Calu3 (cell line): ENCODE measurements at regions of chr6 and their contacts with region 1.

Region 1: GRCh38 chr6:31690231-31691077 is 9.6 kb upstream of the LY6G5C start:
- DNase-seq: peak; percentile 27
- H3K4me3 Mint-ChIP-seq: no peak overlapping the region
- H3K27ac Mint-ChIP-seq: no peak overlapping the region
- H3K4me1 Mint-ChIP-seq: peaks cover 16% of the 10 kb centered on the region
- H3K27me3 Mint-ChIP-seq: no peaks in the 10 kb centered on the region
- CTCF ChIP-seq: no peak

Region 2: DNA sequence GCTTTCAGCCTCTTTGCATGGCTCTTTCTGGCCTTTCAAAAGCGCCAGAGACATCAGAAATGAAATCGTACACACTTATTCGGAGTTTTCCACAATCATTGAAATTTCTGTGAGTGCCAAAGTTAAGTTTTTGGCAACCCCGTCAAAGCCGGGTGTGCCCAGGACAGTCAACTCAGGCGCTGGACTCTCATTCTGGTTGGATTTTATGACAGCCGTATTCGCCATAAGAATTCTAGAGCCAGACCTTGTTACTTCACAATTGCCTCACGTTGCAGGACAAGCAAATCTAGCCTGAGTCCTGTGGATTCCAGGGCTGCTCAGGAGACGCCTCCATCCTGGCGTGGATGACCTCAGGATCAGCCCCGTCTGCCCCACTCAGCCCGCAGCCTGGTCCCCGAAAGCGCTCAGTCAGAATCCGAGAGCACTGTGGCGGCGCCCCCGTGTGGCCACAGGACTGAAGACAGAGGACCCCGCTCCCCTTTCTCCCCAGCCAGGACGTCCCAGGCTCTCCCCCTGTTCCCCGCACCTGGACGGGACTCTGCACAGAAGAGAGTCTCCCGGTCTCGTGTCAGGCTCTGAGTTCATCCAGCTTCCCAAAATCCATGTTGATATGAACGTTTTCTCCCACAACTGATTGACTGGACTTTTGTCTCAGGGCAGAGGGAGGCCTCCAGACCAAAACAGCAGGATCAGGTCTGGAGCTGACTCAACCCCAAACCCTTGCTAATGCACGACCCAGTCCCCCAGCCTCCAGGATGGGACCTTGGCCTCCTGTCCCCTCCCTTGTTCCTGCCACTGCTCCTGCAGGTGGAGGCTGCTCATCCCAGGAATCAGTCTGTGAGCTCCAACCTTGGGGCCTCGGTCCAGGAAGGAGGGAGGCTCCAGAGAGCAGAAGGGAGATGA is 248.8 kb before region 1 on chr6:
- CTCF ChIA-PET with region 1: interaction called, 14 read pairs
- intact Hi-C with region 1: no loop called
- DNase-seq: peak; percentile 93
- H3K4me3 Mint-ChIP-seq: no peak overlapping the region
- H3K27ac Mint-ChIP-seq: no peak overlapping the region
- H3K4me1 Mint-ChIP-seq: peaks cover 8% of the 10 kb centered on the region
- H3K27me3 Mint-ChIP-seq: peaks cover 90% of the 10 kb centered on the region
- CTCF ChIP-seq: peak; percentile 98

Region 3: GRCh38 chr6:31559958-31560696 is 130.3 kb before region 1 on chr6:
- CTCF ChIA-PET with region 1: no interaction called
- intact Hi-C with region 1: no loop called
- DNase-seq: peak; percentile 68
- H3K4me3 Mint-ChIP-seq: no peak overlapping the region
- H3K27ac Mint-ChIP-seq: peak overlapping the region; percentile 22
- H3K4me1 Mint-ChIP-seq: peaks cover 21% of the 10 kb centered on the region
- H3K27me3 Mint-ChIP-seq: peaks cover 9% of the 10 kb centered on the region
- CTCF ChIP-seq: no peak